ENCODE measurements at regions of chr14 and their contacts with region 1.

Region 1: DNA sequence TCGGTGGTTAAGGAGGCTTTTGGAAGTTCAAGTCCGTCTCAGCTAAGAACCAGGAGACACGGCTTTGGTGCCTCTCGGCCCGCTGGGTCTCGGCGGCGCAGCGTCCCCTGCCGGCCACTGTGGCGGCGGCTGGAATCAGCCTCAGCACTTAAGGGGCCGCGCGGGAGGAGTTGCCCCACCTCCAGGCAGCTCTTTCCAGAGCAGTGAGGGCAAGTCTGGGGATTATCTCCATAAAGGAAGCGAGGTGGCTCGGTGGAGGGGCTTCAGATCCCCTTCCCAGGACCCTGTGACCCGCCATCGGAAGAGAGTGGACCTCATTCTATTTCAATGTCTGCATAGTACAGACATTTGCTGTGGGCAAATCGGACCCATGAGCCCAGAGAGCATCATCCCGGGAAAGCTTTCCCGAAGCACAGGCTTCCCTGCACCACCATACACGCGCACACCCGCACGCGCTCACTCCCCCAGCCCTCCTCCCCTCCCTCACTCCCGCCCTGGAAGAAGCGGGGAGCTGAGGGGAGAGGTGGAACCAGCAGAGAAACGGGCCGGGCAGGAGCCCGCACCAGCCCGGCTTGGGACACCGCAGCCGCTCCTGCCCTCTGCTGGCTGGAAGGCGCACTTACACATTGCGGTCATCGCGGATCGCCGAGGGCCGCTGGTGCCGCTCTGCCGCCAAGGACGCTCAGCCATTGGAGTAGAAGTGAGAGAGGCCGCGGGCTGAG is 15.9 kb downstream of the RNASE2 start:
- DNase-seq: peak; percentile 85 to 93 (median 86)
- ATAC-seq: peak; percentile 92 to 97 (median 96)
- H3K4me3 ChIP-seq: peak overlapping the region; percentile 43 to 73 (median 64)
- H3K27ac ChIP-seq: peak overlapping the region in 11 of 12 donors; percentile 14 to 83 (median 58)
- H3K4me1 ChIP-seq: peaks cover 0 to 13% (median 5%) of the 10 kb centered on the region in 12 donors
- H3K27me3 ChIP-seq: no peaks in the 10 kb centered on the region
- CTCF ChIP-seq: peak; percentile 68 to 90 (median 76)
- POLR2A ChIP-seq: no peak

Region 2: DNA sequence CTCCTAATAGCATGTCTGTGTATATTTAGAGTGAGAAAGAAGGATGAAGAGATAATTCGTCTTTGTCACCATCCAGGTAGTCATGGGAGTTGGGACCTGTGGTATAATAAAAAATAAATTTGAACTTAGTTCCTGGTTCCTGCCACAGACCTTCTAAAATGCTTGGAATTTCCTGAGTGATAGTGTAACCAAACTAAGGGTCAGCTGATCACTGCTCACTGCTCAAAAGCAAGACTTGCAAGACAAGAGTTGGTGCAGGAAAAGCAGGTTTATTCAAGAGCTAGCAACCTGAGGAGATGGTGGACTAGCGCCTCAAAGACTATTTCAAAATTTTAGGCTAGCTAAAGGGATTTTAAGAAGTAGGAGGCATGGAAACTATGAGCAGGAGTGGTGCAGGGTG is 263.5 kb before region 1 on chr14:
- intact Hi-C with region 1: loop called in 2 of 10 experiments (anchors 10 kb)
- DNase-seq: no peak
- ATAC-seq: no peak
- H3K4me3 ChIP-seq: no peak overlapping the region
- H3K27ac ChIP-seq: peak overlapping the region in 7 of 12 donors; percentile 1 to 71 (median 25)
- H3K4me1 ChIP-seq: peaks cover 0 to 15% (median 2%) of the 10 kb centered on the region in 12 donors
- H3K27me3 ChIP-seq: no peaks in the 10 kb centered on the region
- CTCF ChIP-seq: no peak
- POLR2A ChIP-seq: no peak

Region 3: DNA sequence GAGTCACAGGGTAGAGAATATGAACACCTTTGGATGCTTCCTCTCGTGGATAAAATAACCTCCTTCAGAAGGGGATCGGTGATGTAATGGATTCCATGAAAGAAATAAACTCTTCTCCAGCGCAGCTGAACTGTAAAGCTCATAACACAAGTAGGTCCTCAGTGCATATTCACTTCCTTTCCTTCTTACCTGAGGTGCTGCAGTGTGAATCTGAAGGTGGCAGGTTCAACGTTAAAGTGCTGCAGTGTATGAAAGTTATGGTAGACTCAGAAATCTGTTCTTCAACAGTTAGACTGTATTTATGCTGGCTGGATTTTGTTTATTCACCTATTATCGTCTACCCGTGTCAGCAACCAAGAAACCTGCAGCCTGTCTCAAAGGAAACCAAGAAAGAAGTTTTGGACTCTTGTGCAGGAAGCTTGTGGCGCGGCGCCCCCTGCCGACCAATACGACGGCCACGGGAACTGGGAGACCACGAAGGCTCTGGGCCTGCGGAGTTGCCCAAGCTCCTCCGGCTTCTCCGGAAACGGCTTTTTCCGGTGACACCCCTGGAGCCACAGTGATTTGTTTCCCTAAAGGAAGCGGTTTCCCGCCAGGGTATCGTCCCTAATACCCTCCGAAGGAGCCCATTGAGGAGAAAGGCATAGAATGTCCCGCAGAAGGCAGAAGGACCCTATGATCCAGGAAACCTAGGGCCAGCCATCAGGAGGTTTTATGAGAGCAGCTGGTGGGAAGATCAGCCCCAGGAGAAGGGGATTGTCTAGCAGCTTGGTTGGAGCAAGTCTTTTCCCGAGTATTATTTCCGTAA is 97.6 kb before region 1 on chr14:
- intact Hi-C with region 1: loop called in 1 of 10 experiments (anchors 5 kb)
- DNase-seq: peak; percentile 84 to 93 (median 88)
- ATAC-seq: peak; percentile 78 to 97 (median 97)
- H3K4me3 ChIP-seq: peak overlapping the region in 8 of 12 donors; percentile 15 to 35 (median 25)
- H3K27ac ChIP-seq: no peak overlapping the region
- H3K4me1 ChIP-seq: peaks cover 0 to 13% (median 2%) of the 10 kb centered on the region in 12 donors
- H3K27me3 ChIP-seq: no peaks in the 10 kb centered on the region
- CTCF ChIP-seq: peak; percentile 67 to 94 (median 83)
- POLR2A ChIP-seq: no peak

Region 4: DNA sequence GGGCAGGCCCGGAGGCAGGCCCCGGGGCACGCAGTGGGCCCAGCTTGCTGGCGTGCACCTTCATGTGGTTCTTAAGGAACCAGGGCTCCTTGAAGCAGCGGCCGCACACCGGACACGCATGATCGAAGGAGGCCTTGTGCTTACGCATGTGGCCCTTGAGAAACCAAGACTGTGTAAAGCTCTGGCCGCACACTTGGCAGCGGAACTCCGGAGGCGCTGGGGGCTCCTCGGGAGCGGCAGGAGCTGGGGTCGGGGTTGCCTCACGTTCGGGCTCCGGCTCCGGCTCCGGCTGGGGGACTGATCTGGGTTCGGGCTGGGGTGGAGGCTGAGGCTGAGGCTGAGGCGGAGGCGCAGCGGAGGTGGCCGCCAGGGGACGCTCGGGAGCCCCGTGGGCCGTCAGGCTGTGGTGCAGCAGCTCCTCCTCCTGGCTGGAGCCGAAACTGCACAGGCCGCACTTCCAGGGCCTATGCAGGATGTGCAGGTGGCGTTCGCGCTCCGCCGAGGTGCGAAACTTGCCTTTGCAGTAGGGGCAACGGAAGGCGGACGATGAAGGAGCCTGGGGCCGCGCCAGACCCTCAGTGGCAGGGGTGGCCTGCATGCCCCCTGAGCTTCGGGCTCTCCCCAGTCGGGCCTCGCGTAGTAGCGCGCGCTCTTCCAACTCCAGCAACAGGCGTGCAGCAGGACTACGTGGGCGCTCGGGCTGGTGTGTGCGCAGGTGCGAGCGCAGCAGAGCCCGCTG is 121.3 kb after region 1 on chr14:
- intact Hi-C with region 1: no loop called
- DNase-seq: peak; percentile 81 to 95 (median 86)
- ATAC-seq: peak; percentile 43 to 87 (median 76)
- H3K4me3 ChIP-seq: peak overlapping the region in 1 of 12 donors; percentile 3
- H3K27ac ChIP-seq: peak overlapping the region in 2 of 12 donors; percentile 21 to 24
- H3K4me1 ChIP-seq: peaks cover 0 to 34% (median 11%) of the 10 kb centered on the region in 12 donors
- H3K27me3 ChIP-seq: no peaks in the 10 kb centered on the region
- CTCF ChIP-seq: peak in 11 of 12 donors; percentile 99 to 100 (median 100)
- POLR2A ChIP-seq: peak in 1 of 2 donors; percentile 22

Region 5: GRCh38 chr14:21145437-21145836 is 174.3 kb after region 1 on chr14:
- intact Hi-C with region 1: no loop called
- DNase-seq: no peak
- ATAC-seq: no peak
- H3K4me3 ChIP-seq: no peak overlapping the region
- H3K27ac ChIP-seq: no peak overlapping the region
- H3K4me1 ChIP-seq: no peaks in the 10 kb centered on the region
- H3K27me3 ChIP-seq: no peaks in the 10 kb centered on the region
- CTCF ChIP-seq: no peak
- POLR2A ChIP-seq: no peak